HepG2 (cell line): ENCODE measurements at regions of chr2 and their contacts with region 1.

Region 1: GRCh38 chr2:21155365-21156136 is 31.8 kb downstream of the TDRD15 start:
- DNase-seq: peak; percentile 73
- ATAC-seq: peak; percentile 95
- H3K4me3 ChIP-seq: peak overlapping the region in 2 of 3 experiments; percentile 12 to 32; a peak in 2 of 6 replicates
- H3K27ac ChIP-seq: peak overlapping the region; percentile 55
- H3K4me1 ChIP-seq: peaks cover 41% of the 10 kb centered on the region
- H3K27me3 ChIP-seq: no peaks in the 10 kb centered on the region
- CTCF ChIP-seq: no peak
- EP300 ChIP-seq: peak in 1 of 2 experiments; percentile 95; a peak in 2 of 4 replicates
- POLR2A ChIP-seq: no peak
- RAD21 ChIP-seq: no peak

Region 2: DNA sequence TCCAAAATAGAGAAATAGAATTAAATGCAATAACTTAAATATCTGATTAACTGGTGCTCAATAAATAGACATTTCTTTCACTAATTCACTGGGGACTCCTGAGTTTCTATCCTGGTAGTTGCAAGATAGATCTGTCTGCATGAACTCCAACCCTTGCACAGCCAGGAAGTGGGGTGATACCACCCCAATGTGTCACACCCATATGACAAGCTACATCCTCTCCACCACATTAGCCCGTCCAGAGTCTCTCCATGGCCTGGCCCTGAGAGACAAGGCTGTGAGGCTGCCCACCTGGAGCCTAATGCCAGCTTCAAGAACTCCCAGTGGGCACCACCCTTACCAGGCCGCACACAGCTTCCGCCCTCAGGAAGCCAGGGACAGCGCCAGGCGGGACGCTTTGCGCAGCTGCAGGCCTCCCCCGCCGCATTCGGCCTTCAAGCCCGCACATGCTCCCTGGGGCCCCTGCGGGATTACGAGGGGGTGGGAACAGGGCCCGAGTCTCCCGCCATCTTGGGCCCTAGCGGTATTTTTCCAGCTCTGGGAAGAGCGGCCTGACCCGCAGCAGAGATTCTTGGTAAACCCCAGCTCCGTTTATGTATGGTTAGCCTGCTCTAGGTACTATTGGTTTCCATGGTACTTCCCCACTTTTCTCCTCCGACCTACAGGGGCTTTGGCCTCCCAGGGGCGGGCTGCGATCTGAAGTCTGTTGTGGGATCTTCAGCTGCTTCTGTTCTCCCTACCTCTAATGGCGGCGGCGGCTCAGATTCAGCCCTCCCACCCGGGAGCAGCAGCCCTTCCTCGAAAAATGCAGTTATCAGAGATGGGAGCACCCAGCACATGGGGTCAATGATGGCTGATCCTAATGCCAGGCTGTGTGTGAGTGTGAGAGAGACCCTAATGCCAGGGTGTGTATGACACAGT is 31.8 kb before region 1 on chr2 and contains the start of gene TDRD15:
- CTCF ChIA-PET with region 1: no interaction called
- POLR2A ChIA-PET with region 1: no interaction called
- in situ Hi-C with region 1: no loop called
- intact Hi-C with region 1: loop called (anchors 1 kb)
- DNase-seq: no peak
- ATAC-seq: peak; percentile 41
- H3K4me3 ChIP-seq: no peak within 1 kb of the TSS
- H3K27ac ChIP-seq: no peak within 1 kb of the TSS
- H3K4me1 ChIP-seq: peaks cover 11% of the 10 kb centered on the region
- H3K27me3 ChIP-seq: no peaks in the 10 kb centered on the region
- CTCF ChIP-seq: no peak
- EP300 ChIP-seq: no peak
- POLR2A ChIP-seq: no peak
- RAD21 ChIP-seq: no peak
- total RNA-seq, gene TDRD15: 0.28 and 0.29 TPM in 2 replicates

Region 3: DNA sequence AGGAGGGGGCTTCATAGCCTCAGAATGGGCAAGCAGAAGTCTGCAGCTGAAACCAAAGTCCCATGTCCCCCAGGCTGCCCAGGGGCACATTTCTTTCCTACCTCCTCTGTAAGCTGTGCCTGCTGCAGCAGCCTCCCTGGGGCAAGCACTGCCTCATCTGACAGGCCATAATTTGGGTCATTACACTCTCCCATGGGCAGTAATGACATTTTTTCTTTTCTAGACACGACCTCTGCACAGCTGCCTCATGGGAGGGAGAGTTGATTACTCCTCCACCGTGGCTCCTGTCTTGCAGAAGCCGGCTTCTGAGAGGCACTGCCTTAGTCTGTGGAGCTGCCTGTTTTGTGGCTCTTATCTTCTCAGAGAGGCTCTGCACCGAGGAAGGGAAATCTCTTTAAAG is 237.1 kb after region 1 on chr2:
- CTCF ChIA-PET with region 1: no interaction called
- POLR2A ChIA-PET with region 1: no interaction called
- in situ Hi-C with region 1: no loop called
- intact Hi-C with region 1: no loop called
- DNase-seq: no peak
- ATAC-seq: no peak
- H3K4me3 ChIP-seq: no peak overlapping the region
- H3K27ac ChIP-seq: no peak overlapping the region
- H3K4me1 ChIP-seq: no peaks in the 10 kb centered on the region
- H3K27me3 ChIP-seq: peaks cover 0 to 4% of the 10 kb centered on the region in 2 experiments; a peak in 1 of 5 replicates
- CTCF ChIP-seq: no peak
- EP300 ChIP-seq: no peak
- POLR2A ChIP-seq: no peak
- RAD21 ChIP-seq: no peak